ENCODE measurements at regions of chr17 and their contacts with region 1.

Region 1: GRCh38 chr17:49556223-49556971 is 19.3 kb upstream of the NXPH3 start:
- DNase-seq: peak; percentile 84 to 88
- ATAC-seq: peak; percentile 89 to 97 (median 94)
- H3K4me3 ChIP-seq: no peak overlapping the region
- H3K4me3 Mint-ChIP-seq: no peak overlapping the region
- H3K27ac ChIP-seq: no peak overlapping the region
- H3K27ac Mint-ChIP-seq: no peak overlapping the region
- H3K4me1 ChIP-seq: peaks cover 17% of the 10 kb centered on the region
- H3K4me1 Mint-ChIP-seq: peaks cover 6 to 32% of the 10 kb centered on the region in 2 donors
- H3K27me3 ChIP-seq: no peaks in the 10 kb centered on the region
- H3K27me3 Mint-ChIP-seq: peaks cover 0 to 9% of the 10 kb centered on the region in 2 donors
- CTCF ChIP-seq: peak; percentile 97

Region 2: DNA sequence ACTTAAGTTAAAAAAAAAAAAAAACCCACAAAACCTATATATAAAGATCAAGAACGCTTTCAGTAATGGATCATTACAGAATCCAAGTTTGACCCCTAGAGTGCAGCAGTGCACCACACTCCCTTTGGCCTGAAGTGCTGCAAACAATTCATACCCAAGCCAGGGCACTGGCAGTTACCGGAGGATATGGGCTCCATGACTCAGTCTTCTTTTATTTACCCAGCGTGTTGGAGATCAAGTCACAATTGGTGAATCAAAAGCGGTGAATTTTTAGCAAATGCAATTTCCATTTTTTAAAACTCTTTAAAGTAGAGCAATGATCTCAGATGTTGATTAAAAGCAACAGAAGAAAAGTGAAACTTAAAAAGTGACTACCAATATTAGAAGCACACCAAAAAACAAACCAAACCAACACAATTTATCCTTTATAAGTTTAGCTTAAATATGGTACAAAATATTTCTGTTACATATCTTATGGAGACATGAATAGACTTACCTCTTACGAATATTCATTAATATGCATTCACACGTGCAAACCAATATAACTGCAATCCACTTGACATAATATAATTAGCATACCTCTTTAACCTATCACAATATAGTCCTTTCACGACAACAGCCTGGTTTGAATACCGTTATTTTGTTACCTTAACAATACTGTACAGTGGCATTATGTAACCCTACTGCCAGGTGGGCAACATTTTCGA is 240.7 kb before region 1 on chr17:
- intact Hi-C with region 1: loop called (anchors 5 kb)
- DNase-seq: peak; percentile 66 to 91
- ATAC-seq: peak; percentile 99
- H3K4me3 ChIP-seq: peak overlapping the region; percentile 21
- H3K4me3 Mint-ChIP-seq: peak overlapping the region; percentile 83
- H3K27ac ChIP-seq: peak overlapping the region; percentile 26
- H3K27ac Mint-ChIP-seq: peak overlapping the region; percentile 10 to 72
- H3K4me1 ChIP-seq: peaks cover 15% of the 10 kb centered on the region
- H3K4me1 Mint-ChIP-seq: peaks cover 25 to 32% of the 10 kb centered on the region in 2 donors
- H3K27me3 ChIP-seq: no peaks in the 10 kb centered on the region
- H3K27me3 Mint-ChIP-seq: no peaks in the 10 kb centered on the region
- CTCF ChIP-seq: peak; percentile 95

Region 3: GRCh38 chr17:49407981-49408501 is 148.4 kb before region 1 on chr17:
- intact Hi-C with region 1: loop called (anchors 1 kb)
- DNase-seq: peak; percentile 83 to 90
- ATAC-seq: peak; percentile 79 to 91 (median 80)
- H3K4me3 ChIP-seq: no peak overlapping the region
- H3K4me3 Mint-ChIP-seq: peak overlapping the region; percentile 17
- H3K27ac ChIP-seq: peak overlapping the region; percentile 4
- H3K27ac Mint-ChIP-seq: peak overlapping the region; percentile 71 to 73
- H3K4me1 ChIP-seq: peaks cover 44% of the 10 kb centered on the region
- H3K4me1 Mint-ChIP-seq: peaks cover 33 to 47% of the 10 kb centered on the region in 2 donors
- H3K27me3 ChIP-seq: no peaks in the 10 kb centered on the region
- H3K27me3 Mint-ChIP-seq: no peaks in the 10 kb centered on the region
- CTCF ChIP-seq: peak; percentile 98

Region 4: DNA sequence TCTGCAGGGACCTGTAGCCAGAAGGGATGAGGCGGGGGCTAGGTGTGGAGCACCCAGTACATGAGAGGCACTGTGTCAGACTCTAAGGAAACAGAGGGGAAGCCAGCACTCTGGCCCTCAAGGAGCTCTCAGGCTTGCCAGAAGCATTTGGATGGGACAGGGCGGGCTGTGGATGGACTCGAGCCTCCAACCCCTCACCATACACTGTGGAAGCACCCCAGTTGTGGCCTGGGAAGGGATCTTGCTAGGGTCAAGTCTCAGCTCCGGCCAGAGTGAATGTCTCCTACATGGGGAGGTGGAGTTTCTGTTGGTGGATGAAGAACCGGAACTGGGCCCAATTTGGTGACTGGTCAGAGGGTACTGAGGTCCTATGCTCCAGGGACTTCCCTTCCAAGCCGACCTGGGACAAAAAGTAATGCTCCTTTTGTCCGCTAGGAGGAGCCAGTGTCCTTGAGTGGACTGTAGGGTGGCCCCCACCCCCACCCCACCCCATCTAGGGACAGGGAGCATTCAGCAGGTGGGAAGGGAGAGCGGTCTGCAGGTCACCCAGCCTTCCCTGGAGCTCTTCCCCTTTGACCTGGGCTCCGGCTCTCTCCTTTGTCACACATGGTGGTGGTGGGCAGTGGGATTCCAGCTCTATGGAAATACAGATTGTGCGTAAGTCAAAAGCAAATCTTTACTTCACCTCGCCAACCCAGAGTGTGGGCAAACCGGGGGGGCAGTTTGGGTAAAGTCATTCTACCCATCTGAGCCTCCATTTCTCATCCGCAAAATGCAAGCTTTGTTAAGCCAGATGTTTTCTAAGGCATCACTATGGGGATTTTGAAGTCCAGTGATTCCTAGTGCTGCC is 121.4 kb before region 1 on chr17:
- intact Hi-C with region 1: loop called (anchors 2 kb)
- DNase-seq: peak in 1 of 2 donors; percentile 71
- ATAC-seq: peak; percentile 57 to 68 (median 63)
- H3K4me3 ChIP-seq: no peak overlapping the region
- H3K4me3 Mint-ChIP-seq: no peak overlapping the region
- H3K27ac ChIP-seq: no peak overlapping the region
- H3K27ac Mint-ChIP-seq: no peak overlapping the region
- H3K4me1 ChIP-seq: peaks cover 12% of the 10 kb centered on the region
- H3K4me1 Mint-ChIP-seq: peaks cover 0 to 6% of the 10 kb centered on the region in 2 donors
- H3K27me3 ChIP-seq: peaks cover 3% of the 10 kb centered on the region
- H3K27me3 Mint-ChIP-seq: peaks cover 14 to 23% of the 10 kb centered on the region in 2 donors
- CTCF ChIP-seq: peak; percentile 67

Region 5: DNA sequence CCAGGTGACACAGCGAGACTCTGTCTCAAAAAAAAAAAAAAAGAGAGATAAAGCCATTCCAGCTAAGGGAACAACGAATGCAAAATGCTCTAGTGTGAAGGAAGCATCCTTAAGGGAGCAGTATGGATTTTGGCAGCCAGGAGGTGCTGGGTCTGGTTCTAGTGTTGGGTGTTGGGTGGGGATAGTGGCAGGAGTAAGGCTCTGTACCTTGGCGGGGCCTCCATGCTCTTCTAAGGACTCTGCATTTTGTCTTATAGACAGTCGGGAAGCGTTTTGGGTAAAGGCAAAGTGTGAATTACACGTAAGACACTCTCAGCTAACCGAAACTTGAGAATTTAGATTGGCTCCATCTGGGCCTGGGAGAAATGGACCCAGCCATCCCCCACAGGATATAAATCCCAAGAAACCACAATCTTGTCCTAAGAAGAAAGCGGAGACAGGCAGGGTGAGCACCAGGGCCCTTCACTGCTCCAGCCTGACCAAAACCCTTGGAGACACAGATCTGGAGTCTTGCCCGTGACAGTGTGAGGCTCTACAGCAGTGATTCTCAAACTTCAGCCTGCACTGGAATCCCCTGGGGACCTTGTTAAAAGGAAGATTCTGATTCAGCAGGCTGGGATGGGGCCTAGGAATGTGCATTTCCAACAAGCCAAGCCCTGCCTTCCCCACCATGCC is 108.6 kb before region 1 on chr17:
- intact Hi-C with region 1: no loop called
- DNase-seq: no peak
- ATAC-seq: no peak
- H3K4me3 ChIP-seq: no peak overlapping the region
- H3K4me3 Mint-ChIP-seq: no peak overlapping the region
- H3K27ac ChIP-seq: no peak overlapping the region
- H3K27ac Mint-ChIP-seq: no peak overlapping the region
- H3K4me1 ChIP-seq: peaks cover 25% of the 10 kb centered on the region
- H3K4me1 Mint-ChIP-seq: peaks cover 20 to 28% of the 10 kb centered on the region in 2 donors
- H3K27me3 ChIP-seq: no peaks in the 10 kb centered on the region
- H3K27me3 Mint-ChIP-seq: peaks cover 0 to 3% of the 10 kb centered on the region in 2 donors
- CTCF ChIP-seq: no peak

Region 6: DNA sequence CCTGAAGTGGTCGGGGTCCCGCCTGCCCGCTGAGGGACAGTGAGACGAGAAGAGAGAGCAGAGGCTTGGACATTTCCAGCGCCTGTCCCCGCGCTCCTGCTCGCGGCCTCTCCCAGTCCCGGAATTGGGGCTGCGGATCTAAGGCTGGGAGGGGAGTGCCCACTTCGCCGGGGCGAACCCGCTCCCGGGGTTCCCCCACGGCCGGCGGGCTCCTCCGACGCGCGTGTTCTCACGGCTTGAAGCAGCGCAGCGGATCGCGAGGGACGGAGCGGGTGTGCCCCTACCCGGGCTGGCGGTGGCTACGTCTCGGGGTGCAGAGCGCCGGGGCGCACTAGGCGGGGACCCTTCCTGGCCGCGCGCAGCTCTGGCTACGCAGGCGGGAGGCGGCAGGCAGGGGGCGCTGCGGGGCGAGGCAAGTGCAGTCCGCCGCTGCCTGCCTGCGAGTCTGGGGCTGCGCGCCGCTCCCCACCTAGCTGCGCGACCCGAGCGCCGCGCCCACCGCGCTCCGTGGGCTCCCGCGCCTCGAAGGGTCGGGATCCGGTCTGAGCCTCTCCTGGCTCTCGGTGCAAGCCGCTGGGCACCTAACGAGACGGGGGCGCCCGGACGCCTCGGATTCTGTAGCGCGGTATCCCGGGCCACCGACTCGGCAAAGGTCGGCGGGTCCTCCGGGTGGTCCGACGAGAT is 60.1 kb before region 1 on chr17:
- intact Hi-C with region 1: loop called (anchors 2 kb)
- DNase-seq: peak; percentile 84 to 89
- ATAC-seq: peak; percentile 78 to 83 (median 80)
- H3K4me3 ChIP-seq: peak overlapping the region; percentile 51
- H3K4me3 Mint-ChIP-seq: peak overlapping the region; percentile 93
- H3K27ac ChIP-seq: no peak overlapping the region
- H3K27ac Mint-ChIP-seq: peak overlapping the region in 1 of 2 donors; percentile 85
- H3K4me1 ChIP-seq: peaks cover 36% of the 10 kb centered on the region
- H3K4me1 Mint-ChIP-seq: peaks cover 26 to 39% of the 10 kb centered on the region in 2 donors
- H3K27me3 ChIP-seq: peaks cover 42% of the 10 kb centered on the region
- H3K27me3 Mint-ChIP-seq: peaks cover 35 to 38% of the 10 kb centered on the region in 2 donors
- CTCF ChIP-seq: peak; percentile 91

Measured in natural killer cell (primary cell).